CD4-positive, alpha-beta memory T cell (primary cell): ENCODE measurements at regions of chr16 and their contacts with region 1.

Region 1: GRCh38 chr16:29700253-29700987 is 21.4 kb downstream of the QPRT start:
- DNase-seq: peak; percentile 78 to 79 (median 79)
- H3K4me3 ChIP-seq: peak overlapping the region in 1 of 2 donors; percentile 11
- H3K4me3 Mint-ChIP-seq: peak overlapping the region; percentile 75 to 87 (median 80)
- H3K27ac ChIP-seq: peak overlapping the region; percentile 61
- H3K27ac Mint-ChIP-seq: peak overlapping the region; percentile 95 to 100 (median 98)
- H3K4me1 ChIP-seq: peaks cover 34% of the 10 kb centered on the region
- H3K4me1 Mint-ChIP-seq: peaks cover 25 to 37% (median 31%) of the 10 kb centered on the region in 4 donors
- H3K27me3 ChIP-seq: no peaks in the 10 kb centered on the region
- H3K27me3 Mint-ChIP-seq: no peaks in the 10 kb centered on the region

Region 2: DNA sequence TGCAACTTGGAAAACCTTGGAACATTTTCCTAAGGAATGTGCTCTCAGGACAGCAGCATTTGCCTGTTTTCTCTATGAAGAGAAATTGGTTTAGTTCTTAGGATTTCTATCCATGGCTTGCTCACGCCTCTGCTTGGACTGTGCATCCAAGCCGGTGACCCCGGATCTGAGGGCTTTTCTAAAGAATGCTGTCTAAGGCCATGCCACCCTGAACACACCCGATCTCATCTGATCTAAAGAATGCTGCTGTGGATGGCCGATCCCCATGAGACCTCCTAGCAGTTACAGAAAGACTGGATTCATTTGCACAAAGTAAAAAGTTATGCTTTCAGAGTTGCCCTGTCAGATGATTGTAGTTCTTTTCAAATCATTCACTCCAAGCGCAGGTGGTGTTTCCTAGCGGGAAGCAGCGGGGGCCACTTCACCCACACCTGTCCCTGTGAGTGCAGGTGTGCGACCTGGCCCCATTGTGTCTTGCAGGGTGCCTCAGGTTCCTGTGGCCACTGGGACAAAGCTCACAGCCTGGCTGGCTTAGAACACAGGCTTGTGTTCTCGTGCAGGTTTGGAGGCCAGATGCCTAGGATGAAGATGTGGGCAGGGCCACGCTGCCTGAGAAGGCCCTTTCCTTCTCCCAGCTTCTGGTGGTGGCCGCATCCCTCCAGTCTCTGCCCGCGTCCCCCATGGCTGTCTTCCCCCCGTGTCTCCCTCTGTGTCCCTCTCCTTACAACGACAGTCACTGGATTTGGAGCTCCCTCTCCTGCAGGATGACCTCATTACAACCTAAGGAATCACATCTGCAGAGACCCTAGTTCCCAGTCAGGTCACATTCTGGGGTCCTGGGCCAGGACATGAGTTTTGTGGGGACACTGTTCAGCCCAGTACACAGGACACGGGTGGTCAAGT is 384.6 kb before region 1 on chr16:
- CTCF ChIA-PET with region 1: no interaction called
- POLR2A ChIA-PET with region 1: no interaction called
- intact Hi-C with region 1: no loop called
- DNase-seq: no peak
- H3K4me3 ChIP-seq: no peak overlapping the region
- H3K4me3 Mint-ChIP-seq: no peak overlapping the region
- H3K27ac ChIP-seq: no peak overlapping the region
- H3K27ac Mint-ChIP-seq: peak overlapping the region in 1 of 7 donors; percentile 30
- H3K4me1 ChIP-seq: no peaks in the 10 kb centered on the region
- H3K4me1 Mint-ChIP-seq: no peaks in the 10 kb centered on the region
- H3K27me3 ChIP-seq: no peaks in the 10 kb centered on the region
- H3K27me3 Mint-ChIP-seq: no peaks in the 10 kb centered on the region

Region 3: GRCh38 chr16:29649588-29650494 is 50.6 kb before region 1 on chr16:
- CTCF ChIA-PET with region 1: no interaction called
- POLR2A ChIA-PET with region 1: no interaction called
- intact Hi-C with region 1: no loop called
- DNase-seq: no peak
- H3K4me3 ChIP-seq: no peak overlapping the region
- H3K4me3 Mint-ChIP-seq: no peak overlapping the region
- H3K27ac ChIP-seq: no peak overlapping the region
- H3K27ac Mint-ChIP-seq: peak overlapping the region in 4 of 7 donors; percentile 18 to 85 (median 53)
- H3K4me1 ChIP-seq: peaks cover 8% of the 10 kb centered on the region
- H3K4me1 Mint-ChIP-seq: peaks cover 9 to 13% (median 10%) of the 10 kb centered on the region in 4 donors
- H3K27me3 ChIP-seq: no peaks in the 10 kb centered on the region
- H3K27me3 Mint-ChIP-seq: no peaks in the 10 kb centered on the region

Region 4: GRCh38 chr16:29729116-29729521 is 28.7 kb after region 1 on chr16:
- CTCF ChIA-PET with region 1: interaction called, 172 read pairs
- POLR2A ChIA-PET with region 1: interaction called, 28 read pairs
- intact Hi-C with region 1: no loop called
- DNase-seq: no peak
- H3K4me3 ChIP-seq: no peak overlapping the region
- H3K4me3 Mint-ChIP-seq: peak overlapping the region in 1 of 8 donors; percentile 20
- H3K27ac ChIP-seq: no peak overlapping the region
- H3K27ac Mint-ChIP-seq: peak overlapping the region in 3 of 7 donors; percentile 24 to 66 (median 36)
- H3K4me1 ChIP-seq: peaks cover 14% of the 10 kb centered on the region
- H3K4me1 Mint-ChIP-seq: peaks cover 17 to 32% (median 21%) of the 10 kb centered on the region in 4 donors
- H3K27me3 ChIP-seq: no peaks in the 10 kb centered on the region
- H3K27me3 Mint-ChIP-seq: no peaks in the 10 kb centered on the region

Region 5: GRCh38 chr16:29757950-29758466 is 57.6 kb after region 1 on chr16:
- CTCF ChIA-PET with region 1: interaction called, 7 read pairs
- POLR2A ChIA-PET with region 1: interaction called, 20 read pairs
- intact Hi-C with region 1: no loop called
- DNase-seq: no peak
- H3K4me3 ChIP-seq: no peak overlapping the region
- H3K4me3 Mint-ChIP-seq: no peak overlapping the region
- H3K27ac ChIP-seq: no peak overlapping the region
- H3K27ac Mint-ChIP-seq: peak overlapping the region in 3 of 7 donors; percentile 6 to 75 (median 46)
- H3K4me1 ChIP-seq: peaks cover 23% of the 10 kb centered on the region
- H3K4me1 Mint-ChIP-seq: peaks cover 19 to 43% (median 27%) of the 10 kb centered on the region in 4 donors
- H3K27me3 ChIP-seq: no peaks in the 10 kb centered on the region
- H3K27me3 Mint-ChIP-seq: no peaks in the 10 kb centered on the region

Region 6: GRCh38 chr16:29815793-29816693 is 115.6 kb after region 1 on chr16 and contains the start of gene PAGR1:
- CTCF ChIA-PET with region 1: interaction called, 87 read pairs
- POLR2A ChIA-PET with region 1: interaction called, 148 read pairs
- intact Hi-C with region 1: loop called (anchors 1 kb)
- DNase-seq: peak; percentile 99 to 100 (median 99)
- H3K4me3 ChIP-seq: peak within 1 kb of the TSS; percentile 91 to 95
- H3K4me3 Mint-ChIP-seq: peak within 1 kb of the TSS; percentile 95 to 99 (median 98)
- H3K27ac ChIP-seq: peak within 1 kb of the TSS; percentile 77
- H3K27ac Mint-ChIP-seq: peak within 1 kb of the TSS; percentile 94 to 100 (median 98)
- H3K4me1 ChIP-seq: peaks cover 66% of the 10 kb centered on the region
- H3K4me1 Mint-ChIP-seq: peaks cover 30 to 87% (median 56%) of the 10 kb centered on the region in 4 donors
- H3K27me3 ChIP-seq: no peaks in the 10 kb centered on the region
- H3K27me3 Mint-ChIP-seq: peaks cover 0 to 2% of the 10 kb centered on the region in 2 donors
- total RNA-seq, gene PAGR1: 43.7 to 44.9 TPM

Region 7: DNA sequence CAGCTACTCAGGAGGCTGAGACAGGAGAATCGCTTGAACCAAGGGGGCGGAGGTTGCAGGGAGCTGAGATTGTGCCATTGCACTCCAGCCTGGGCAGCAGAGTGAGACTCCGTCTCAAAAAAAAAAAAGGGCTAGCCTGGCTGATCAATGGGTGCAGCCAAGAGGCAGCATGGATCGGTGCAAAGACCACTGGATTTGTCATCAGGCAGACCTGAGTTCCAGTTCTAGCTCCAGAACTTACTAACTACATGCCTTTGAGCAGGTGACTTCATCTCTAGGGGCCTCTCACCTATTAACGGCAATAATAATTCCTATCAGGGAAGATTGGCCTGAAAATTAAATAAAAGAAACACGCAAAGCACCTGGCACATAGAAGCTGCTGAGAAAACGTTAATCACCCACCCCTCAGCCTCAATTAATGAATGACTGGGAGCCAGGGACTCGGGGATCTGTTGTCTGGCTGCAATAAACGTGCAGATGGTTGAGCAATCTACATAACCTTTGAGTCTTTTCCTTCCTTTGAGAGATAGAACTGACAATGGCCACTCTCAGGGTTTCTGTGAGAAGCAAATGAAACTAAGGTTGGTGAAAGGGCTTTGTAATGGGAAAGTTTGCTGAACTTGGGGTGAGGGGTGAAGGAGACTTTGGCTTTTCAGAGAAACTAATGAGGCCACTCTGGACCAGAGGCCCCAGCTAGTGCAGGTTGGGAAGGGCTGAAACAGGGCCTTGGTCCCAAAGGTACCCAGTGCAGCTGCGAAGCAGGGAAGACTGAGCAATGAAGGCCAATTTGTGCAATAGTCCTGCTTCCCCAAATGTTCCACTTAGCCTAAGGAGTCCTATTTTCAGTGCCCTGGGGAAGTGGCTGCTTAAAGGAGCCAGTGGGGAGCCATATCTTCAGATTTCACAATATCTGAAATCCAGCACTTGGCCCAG is 191.4 kb after region 1 on chr16:
- CTCF ChIA-PET with region 1: no interaction called
- POLR2A ChIA-PET with region 1: no interaction called
- intact Hi-C with region 1: no loop called
- DNase-seq: no peak
- H3K4me3 ChIP-seq: no peak overlapping the region
- H3K4me3 Mint-ChIP-seq: no peak overlapping the region
- H3K27ac ChIP-seq: no peak overlapping the region
- H3K27ac Mint-ChIP-seq: no peak overlapping the region
- H3K4me1 ChIP-seq: no peaks in the 10 kb centered on the region
- H3K4me1 Mint-ChIP-seq: no peaks in the 10 kb centered on the region
- H3K27me3 ChIP-seq: no peaks in the 10 kb centered on the region
- H3K27me3 Mint-ChIP-seq: peaks cover 4 to 10% of the 10 kb centered on the region in 2 donors

Region 8: GRCh38 chr16:29995911-29996772 is 295.7 kb after region 1 on chr16 and contains the start of gene INO80E:
- CTCF ChIA-PET with region 1: interaction called, 3 read pairs
- POLR2A ChIA-PET with region 1: interaction called, 8 read pairs
- intact Hi-C with region 1: loop called (anchors 2 kb)
- DNase-seq: peak; percentile 98 to 99 (median 98)
- H3K4me3 ChIP-seq: peak within 1 kb of the TSS; percentile 72 to 97
- H3K4me3 Mint-ChIP-seq: peak within 1 kb of the TSS; percentile 95 to 98 (median 98)
- H3K27ac ChIP-seq: peak within 1 kb of the TSS; percentile 98
- H3K27ac Mint-ChIP-seq: peak within 1 kb of the TSS; percentile 97 to 99 (median 99)
- H3K4me1 ChIP-seq: peaks cover 23% of the 10 kb centered on the region
- H3K4me1 Mint-ChIP-seq: peaks cover 14 to 44% (median 32%) of the 10 kb centered on the region in 4 donors
- H3K27me3 ChIP-seq: no peaks in the 10 kb centered on the region
- H3K27me3 Mint-ChIP-seq: no peaks in the 10 kb centered on the region
- total RNA-seq, gene INO80E: 124 to 126 TPM

Region 9: DNA sequence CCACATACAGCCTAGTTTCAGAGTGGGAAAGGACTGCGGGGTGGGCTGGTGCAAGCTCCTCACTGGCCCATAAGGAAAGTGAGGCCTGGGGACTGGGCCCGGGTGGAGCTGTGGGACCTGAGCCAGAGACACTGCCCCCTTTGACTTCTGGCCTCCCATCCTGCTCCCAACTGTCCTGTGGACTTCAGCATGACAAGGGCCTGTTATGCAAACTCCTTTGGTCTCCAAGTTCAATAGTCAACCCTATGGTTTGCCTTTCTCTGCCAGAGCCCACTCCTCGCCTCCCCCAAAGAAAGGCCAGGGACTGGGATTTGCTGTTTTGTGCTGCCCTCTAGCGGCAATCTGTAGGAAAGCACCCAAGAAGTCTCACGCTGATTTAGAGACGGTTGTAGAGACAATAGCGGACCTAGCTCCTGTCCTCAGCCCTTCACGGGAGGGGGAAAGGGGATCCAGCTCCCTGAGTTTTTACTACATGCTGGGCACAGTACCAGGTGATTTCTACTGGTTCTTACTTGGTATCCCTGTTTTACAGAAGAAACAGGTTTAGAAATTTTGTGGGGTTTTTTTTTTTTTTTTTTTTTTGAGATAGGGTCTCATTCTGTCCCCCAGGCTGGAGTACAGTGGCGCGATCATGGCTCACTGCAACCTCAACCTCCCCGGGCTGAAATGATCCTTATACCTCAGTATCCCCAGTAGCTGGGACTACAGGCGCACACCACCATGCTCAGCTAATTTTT is 331.8 kb after region 1 on chr16:
- CTCF ChIA-PET with region 1: interaction called, 16 read pairs
- POLR2A ChIA-PET with region 1: interaction called, 5 read pairs
- intact Hi-C with region 1: no loop called
- DNase-seq: peak; percentile 61 to 70 (median 66)
- H3K4me3 ChIP-seq: no peak overlapping the region
- H3K4me3 Mint-ChIP-seq: peak overlapping the region in 5 of 8 donors; percentile 35 to 76 (median 43)
- H3K27ac ChIP-seq: no peak overlapping the region
- H3K27ac Mint-ChIP-seq: peak overlapping the region in 1 of 7 donors; percentile 48
- H3K4me1 ChIP-seq: peaks cover 5% of the 10 kb centered on the region
- H3K4me1 Mint-ChIP-seq: peaks cover 4 to 18% (median 4%) of the 10 kb centered on the region in 4 donors
- H3K27me3 ChIP-seq: peaks cover 18% of the 10 kb centered on the region
- H3K27me3 Mint-ChIP-seq: peaks cover 26 to 37% of the 10 kb centered on the region in 2 donors

Region 10: GRCh38 chr16:30166202-30166902 is 465.9 kb after region 1 on chr16:
- CTCF ChIA-PET with region 1: no interaction called
- POLR2A ChIA-PET with region 1: no interaction called
- intact Hi-C with region 1: no loop called
- DNase-seq: peak in 1 of 5 donors; percentile 20
- H3K4me3 ChIP-seq: no peak overlapping the region
- H3K4me3 Mint-ChIP-seq: peak overlapping the region in 7 of 8 donors; percentile 25 to 85 (median 49)
- H3K27ac ChIP-seq: no peak overlapping the region
- H3K27ac Mint-ChIP-seq: peak overlapping the region in 4 of 7 donors; percentile 60 to 87 (median 76)
- H3K4me1 ChIP-seq: peaks cover 11% of the 10 kb centered on the region
- H3K4me1 Mint-ChIP-seq: peaks cover 20 to 39% (median 29%) of the 10 kb centered on the region in 4 donors
- H3K27me3 ChIP-seq: no peaks in the 10 kb centered on the region
- H3K27me3 Mint-ChIP-seq: no peaks in the 10 kb centered on the region